GM12878 (cell line): ENCODE measurements at regions of chr4 and their contacts with region 1.

Region 1: GRCh38 chr4:77566148-77566547 is 39.5 kb upstream of the CXCL13 start:
- DNase-seq: no peak
- ATAC-seq: no peak
- H3K4me3 ChIP-seq: no peak overlapping the region
- H3K27ac ChIP-seq: no peak overlapping the region
- H3K4me1 ChIP-seq: no peaks in the 10 kb centered on the region
- H3K27me3 ChIP-seq: no peaks in the 10 kb centered on the region
- CTCF ChIP-seq: no peak
- EP300 ChIP-seq: no peak
- POLR2A ChIP-seq: no peak
- RAD21 ChIP-seq: no peak

Region 2: DNA sequence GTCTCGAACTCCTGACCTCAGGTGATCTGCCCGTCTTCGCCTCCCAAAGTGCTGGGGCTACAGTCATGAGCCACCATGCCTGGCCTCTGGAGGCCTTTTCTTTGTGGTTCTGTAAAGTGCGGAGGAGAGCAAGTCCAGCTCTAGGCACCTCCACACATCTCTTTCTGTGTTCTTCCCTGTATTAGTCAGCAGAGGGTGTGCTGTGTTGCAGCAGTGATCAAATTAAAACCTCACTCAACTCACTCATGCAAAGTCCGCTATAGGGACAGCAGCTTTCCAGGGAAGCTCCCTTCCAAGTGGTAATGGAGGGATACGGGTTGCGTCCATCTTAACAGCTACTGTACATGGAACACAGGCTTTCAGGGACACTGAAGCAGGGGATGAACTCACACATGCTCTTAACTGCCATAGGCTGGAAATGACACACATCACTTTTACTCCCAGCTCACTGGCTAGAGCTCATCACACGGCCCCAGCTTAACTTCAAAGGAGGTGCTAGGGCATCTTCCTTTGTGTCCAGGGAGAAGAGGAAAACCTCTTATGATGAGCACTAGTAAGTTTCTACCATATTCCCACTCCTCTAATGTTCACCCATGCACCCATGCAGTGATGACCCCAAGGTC is 445.2 kb before region 1 on chr4:
- CTCF ChIA-PET with region 1: no interaction called
- POLR2A ChIA-PET with region 1: no interaction called
- RAD21 ChIA-PET with region 1: no interaction called
- SMC1A ChIA-PET with region 1: no interaction called
- in situ Hi-C with region 1: no loop called
- intact Hi-C with region 1: no loop called
- DNase-seq: no peak
- ATAC-seq: peak; percentile 79
- H3K4me3 ChIP-seq: no peak overlapping the region
- H3K27ac ChIP-seq: no peak overlapping the region
- H3K4me1 ChIP-seq: no peaks in the 10 kb centered on the region
- H3K27me3 ChIP-seq: no peaks in the 10 kb centered on the region
- CTCF ChIP-seq: peak; percentile 17 to 38 (median 22); a peak in 4 of 6 replicates
- EP300 ChIP-seq: no peak
- POLR2A ChIP-seq: no peak
- RAD21 ChIP-seq: peak; percentile 52; the same call in 1 of the 2 replicates

Region 3: GRCh38 chr4:77454858-77455257 is 111.3 kb before region 1 on chr4:
- CTCF ChIA-PET with region 1: no interaction called
- POLR2A ChIA-PET with region 1: no interaction called
- RAD21 ChIA-PET with region 1: no interaction called
- SMC1A ChIA-PET with region 1: interaction called, 3 read pairs
- in situ Hi-C with region 1: no loop called
- intact Hi-C with region 1: loop called (anchors 5 kb)
- DNase-seq: no peak
- ATAC-seq: no peak
- H3K4me3 ChIP-seq: no peak overlapping the region
- H3K27ac ChIP-seq: no peak overlapping the region
- H3K4me1 ChIP-seq: no peaks in the 10 kb centered on the region
- H3K27me3 ChIP-seq: no peaks in the 10 kb centered on the region; a peak in 1 of 4 replicates
- CTCF ChIP-seq: no peak
- EP300 ChIP-seq: no peak
- POLR2A ChIP-seq: no peak
- RAD21 ChIP-seq: no peak

Region 4: DNA sequence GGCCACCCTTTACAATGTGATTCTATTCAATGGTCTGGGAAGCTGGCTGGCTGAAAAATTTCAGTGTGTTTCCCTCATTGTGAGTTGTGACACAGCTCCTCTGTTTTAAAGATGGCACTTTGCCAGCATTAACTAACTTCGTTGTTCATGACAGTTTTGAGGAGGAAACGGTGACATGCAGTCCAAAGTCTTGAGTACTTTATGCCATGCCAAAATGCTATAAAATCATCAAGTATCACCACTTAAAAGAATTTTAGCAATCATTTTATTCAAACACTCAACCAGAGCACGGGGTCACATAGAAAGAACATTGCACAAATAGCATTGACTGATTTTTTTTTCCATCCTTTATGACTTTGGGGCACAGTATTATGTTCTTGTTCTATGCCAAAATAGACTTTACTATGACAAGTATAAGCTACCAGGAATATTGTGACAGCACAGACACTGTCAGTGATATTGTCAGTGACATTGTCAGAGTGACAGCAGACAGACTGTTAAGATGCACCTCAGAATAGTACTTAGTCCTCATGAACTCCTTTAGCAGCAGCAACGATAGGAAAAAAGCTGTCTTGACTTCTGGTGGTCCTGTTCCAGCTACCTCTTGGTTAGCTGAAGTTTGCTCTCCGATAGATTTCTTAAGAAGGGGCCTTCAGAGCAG is 86.2 kb after region 1 on chr4:
- CTCF ChIA-PET with region 1: no interaction called
- POLR2A ChIA-PET with region 1: no interaction called
- RAD21 ChIA-PET with region 1: no interaction called
- SMC1A ChIA-PET with region 1: no interaction called
- in situ Hi-C with region 1: no loop called
- intact Hi-C with region 1: no loop called
- DNase-seq: no peak
- ATAC-seq: no peak
- H3K4me3 ChIP-seq: no peak overlapping the region
- H3K27ac ChIP-seq: no peak overlapping the region
- H3K4me1 ChIP-seq: no peaks in the 10 kb centered on the region
- H3K27me3 ChIP-seq: no peaks in the 10 kb centered on the region; a peak in 1 of 4 replicates
- CTCF ChIP-seq: no peak
- EP300 ChIP-seq: no peak
- POLR2A ChIP-seq: no peak
- RAD21 ChIP-seq: no peak